HCT116 (cell line): ENCODE measurements at regions of chr21 and their contacts with region 1.

Region 1: DNA sequence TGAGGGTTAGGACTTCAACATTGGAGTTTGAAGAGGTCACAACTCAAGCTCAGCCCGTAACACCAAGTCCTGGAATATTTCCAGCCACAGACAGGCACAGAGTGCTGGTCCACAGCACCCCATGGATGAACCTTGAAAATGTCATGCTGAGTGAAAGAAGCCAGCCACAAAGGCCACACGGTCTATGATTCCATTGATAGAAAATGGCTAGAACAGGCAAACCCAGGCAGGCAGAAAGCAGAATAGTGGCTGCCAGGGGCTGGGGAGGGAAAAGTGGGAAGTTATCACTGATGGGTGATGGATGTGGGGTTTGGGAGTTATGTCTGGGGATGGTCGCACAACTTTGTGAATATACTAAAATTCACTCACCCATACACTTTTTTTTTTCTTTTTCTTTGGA is 21.3 kb downstream of the MX1 start:
- DNase-seq: no peak
- ATAC-seq: no peak
- H3K4me3 ChIP-seq: no peak overlapping the region
- H3K27ac ChIP-seq: no peak overlapping the region
- H3K4me1 ChIP-seq: no peaks in the 10 kb centered on the region
- H3K27me3 ChIP-seq: no peaks in the 10 kb centered on the region
- CTCF ChIP-seq: no peak
- POLR2A ChIP-seq: no peak
- RAD21 ChIP-seq: no peak

Region 2: GRCh38 chr21:41431788-41432548 is 15.4 kb before region 1 on chr21:
- CTCF ChIA-PET with region 1: no interaction called
- POLR2A ChIA-PET with region 1: no interaction called
- RAD21 ChIA-PET with region 1: no interaction called
- intact Hi-C with region 1: no loop called
- DNase-seq: no peak
- ATAC-seq: no peak
- H3K4me3 ChIP-seq: no peak overlapping the region
- H3K27ac ChIP-seq: no peak overlapping the region
- H3K4me1 ChIP-seq: no peaks in the 10 kb centered on the region
- H3K27me3 ChIP-seq: peaks cover 4% of the 10 kb centered on the region; the same call in 1 of the 2 replicates
- CTCF ChIP-seq: no peak
- POLR2A ChIP-seq: no peak
- RAD21 ChIP-seq: no peak

Region 3: GRCh38 chr21:41478319-41479051 is 31.1 kb after region 1 on chr21:
- CTCF ChIA-PET with region 1: no interaction called
- POLR2A ChIA-PET with region 1: no interaction called
- RAD21 ChIA-PET with region 1: no interaction called
- intact Hi-C with region 1: loop called (anchors 1 kb)
- DNase-seq: no peak
- ATAC-seq: no peak
- H3K4me3 ChIP-seq: no peak overlapping the region
- H3K27ac ChIP-seq: no peak overlapping the region
- H3K4me1 ChIP-seq: no peaks in the 10 kb centered on the region
- H3K27me3 ChIP-seq: no peaks in the 10 kb centered on the region; the same call in none of the 2 replicates
- CTCF ChIP-seq: no peak
- POLR2A ChIP-seq: no peak
- RAD21 ChIP-seq: no peak

Region 4: GRCh38 chr21:41535819-41536640 is 88.7 kb after region 1 on chr21:
- CTCF ChIA-PET with region 1: no interaction called
- POLR2A ChIA-PET with region 1: no interaction called
- RAD21 ChIA-PET with region 1: no interaction called
- intact Hi-C with region 1: no loop called
- DNase-seq: no peak
- ATAC-seq: no peak
- H3K4me3 ChIP-seq: no peak overlapping the region
- H3K27ac ChIP-seq: no peak overlapping the region
- H3K4me1 ChIP-seq: peaks cover 4 to 8% of the 10 kb centered on the region in 2 experiments; a peak in 2 of 4 replicates
- H3K27me3 ChIP-seq: peaks cover 11% of the 10 kb centered on the region
- CTCF ChIP-seq: no peak
- POLR2A ChIP-seq: no peak
- RAD21 ChIP-seq: no peak

Region 5: DNA sequence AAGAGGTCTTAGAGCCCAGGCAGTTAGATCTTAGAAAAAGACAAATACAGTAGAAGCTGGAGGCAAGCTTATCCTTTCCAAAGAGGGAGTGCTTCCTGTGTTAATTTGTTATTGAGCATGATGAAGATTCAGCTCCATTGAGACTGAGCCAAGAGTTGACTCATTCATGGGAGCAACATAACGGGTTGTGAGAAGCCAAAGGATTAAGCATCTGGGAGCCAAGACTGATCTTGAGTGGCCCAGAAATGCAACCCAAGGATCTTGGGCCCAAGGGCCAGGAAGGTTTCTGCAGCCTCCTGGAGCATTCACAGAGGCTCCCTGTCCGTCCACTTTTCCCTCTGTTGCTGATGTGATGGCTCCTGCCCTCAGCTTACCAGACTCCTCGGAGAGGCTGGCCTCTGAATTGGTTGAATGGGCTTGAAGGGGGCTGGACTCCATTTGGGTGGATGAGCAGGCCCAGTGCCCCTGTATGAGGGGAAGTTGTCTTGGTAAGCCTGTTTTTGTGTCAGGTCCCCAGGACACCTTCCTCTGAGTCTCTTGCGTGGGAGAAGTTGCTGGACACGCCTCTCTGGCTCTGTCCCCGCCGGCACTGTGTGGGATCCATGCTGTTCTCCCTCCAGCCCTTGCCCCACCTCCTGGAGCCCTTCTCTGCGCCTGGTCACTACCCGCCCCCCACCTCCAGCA is 1248.5 kb after region 1 on chr21:
- CTCF ChIA-PET with region 1: no interaction called
- POLR2A ChIA-PET with region 1: no interaction called
- RAD21 ChIA-PET with region 1: no interaction called
- intact Hi-C with region 1: no loop called
- DNase-seq: no peak
- ATAC-seq: no peak
- H3K4me3 ChIP-seq: no peak overlapping the region
- H3K27ac ChIP-seq: no peak overlapping the region
- H3K4me1 ChIP-seq: no peaks in the 10 kb centered on the region
- H3K27me3 ChIP-seq: no peaks in the 10 kb centered on the region
- CTCF ChIP-seq: no peak
- POLR2A ChIP-seq: no peak
- RAD21 ChIP-seq: no peak